ENCODE measurements at regions of chr1 and their contacts with region 1.

Region 1: DNA sequence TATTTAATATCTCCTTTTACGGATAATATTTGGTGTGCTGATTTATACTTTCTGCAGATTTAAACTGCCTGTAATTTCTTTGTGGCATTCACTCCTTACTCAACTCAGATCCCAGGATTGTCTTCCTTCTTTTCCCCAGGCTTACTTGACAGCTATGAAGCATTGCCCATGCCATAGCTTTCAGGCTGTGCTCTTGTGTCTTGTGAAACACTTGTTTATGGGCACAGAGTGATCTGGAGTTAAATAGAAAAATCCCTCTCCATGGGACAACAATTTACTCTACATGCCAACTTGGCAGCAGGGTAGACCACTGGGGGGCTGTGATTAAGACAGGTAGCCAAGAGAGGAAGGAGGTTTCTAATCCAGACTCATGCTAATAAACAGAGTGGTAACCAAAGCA is 57.4 kb downstream of the PPP1R12B start:
- DNase-seq: no peak
- ATAC-seq: peak; percentile 38 to 71 (median 58)
- H3K4me3 ChIP-seq: peak overlapping the region; percentile 60
- H3K27ac ChIP-seq: peak overlapping the region; percentile 97
- H3K4me1 ChIP-seq: peaks cover 27% of the 10 kb centered on the region
- H3K27me3 ChIP-seq: no peaks in the 10 kb centered on the region
- CTCF ChIP-seq: no peak

Region 2: DNA sequence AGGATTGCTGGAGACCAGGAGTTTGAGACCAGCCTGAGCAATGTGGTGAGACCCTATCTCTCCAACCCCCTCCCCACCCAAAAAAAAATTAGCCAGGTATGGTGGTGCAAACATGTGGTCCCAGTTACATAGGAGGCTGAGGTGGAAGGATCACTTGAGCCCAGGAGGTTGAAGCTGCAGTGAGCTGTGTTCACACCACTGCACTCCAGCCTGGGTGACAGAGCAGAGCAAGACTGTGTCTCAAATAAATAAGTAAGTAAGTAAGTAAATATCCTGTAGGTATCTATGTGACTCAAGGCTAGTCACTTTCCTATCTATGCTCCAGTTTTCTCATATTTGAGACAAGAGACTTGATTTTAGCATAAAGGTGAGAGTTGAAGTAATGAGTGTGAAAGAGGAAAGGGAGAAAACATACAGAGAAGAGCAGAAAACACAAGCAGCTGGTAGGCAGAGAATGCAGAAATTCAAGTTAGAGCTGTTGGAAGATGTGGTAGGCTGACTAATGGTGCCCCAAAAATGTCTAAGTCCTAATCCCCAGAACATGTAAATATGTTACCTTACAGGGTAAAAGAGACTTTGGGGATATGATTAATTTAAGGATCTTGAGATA is 49.9 kb before region 1 on chr1:
- intact Hi-C with region 1: loop called in 1 of 2 experiments (anchors 5 kb)
- DNase-seq: no peak
- ATAC-seq: no peak
- H3K4me3 ChIP-seq: no peak overlapping the region
- H3K27ac ChIP-seq: peak overlapping the region; percentile 7
- H3K4me1 ChIP-seq: peaks cover 28% of the 10 kb centered on the region
- H3K27me3 ChIP-seq: no peaks in the 10 kb centered on the region
- CTCF ChIP-seq: no peak

Region 3: GRCh38 chr1:202438432-202439174 is 32.7 kb after region 1 on chr1:
- intact Hi-C with region 1: no loop called
- DNase-seq: peak in 1 of 2 donors; percentile 56
- ATAC-seq: peak in 3 of 4 donors; percentile 15 to 22 (median 16)
- H3K4me3 ChIP-seq: no peak overlapping the region
- H3K27ac ChIP-seq: no peak overlapping the region
- H3K4me1 ChIP-seq: no peaks in the 10 kb centered on the region
- H3K27me3 ChIP-seq: no peaks in the 10 kb centered on the region
- CTCF ChIP-seq: no peak

Region 4: DNA sequence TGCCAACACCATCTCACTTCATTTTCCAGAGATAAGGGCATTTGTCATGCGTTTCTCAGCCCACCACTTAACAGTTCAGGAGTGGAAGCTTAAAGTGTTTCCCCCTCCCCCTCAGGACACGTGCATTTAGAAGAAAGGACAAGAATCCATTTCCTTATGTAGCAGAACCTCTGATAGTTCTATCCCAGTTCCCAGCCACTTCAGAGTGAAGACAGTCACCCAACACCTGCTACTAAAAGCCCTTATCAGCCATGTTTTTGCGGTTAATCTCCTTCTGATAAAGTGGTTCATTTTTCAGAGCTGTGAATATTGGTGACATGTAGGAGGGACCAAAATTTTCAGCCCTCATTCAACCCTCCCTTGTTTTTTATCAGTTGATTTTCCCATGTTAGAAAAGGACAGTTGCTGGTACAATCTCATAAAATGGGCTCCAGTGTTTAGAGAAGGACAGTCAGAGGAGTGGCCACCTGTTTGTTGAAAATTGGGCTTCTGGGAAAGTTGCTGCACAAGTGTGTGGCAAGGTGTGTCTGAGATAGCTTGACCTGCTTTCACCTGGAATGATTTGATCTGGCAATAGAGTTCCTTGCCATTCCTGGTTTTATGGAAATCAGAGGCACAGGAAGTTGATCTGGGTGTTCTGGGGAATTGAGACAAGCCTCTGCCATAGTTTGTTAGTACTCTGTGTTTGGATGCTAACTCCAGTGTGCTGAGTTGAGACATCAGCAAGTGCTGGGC is 56.6 kb after region 1 on chr1:
- intact Hi-C with region 1: no loop called
- DNase-seq: no peak
- ATAC-seq: no peak
- H3K4me3 ChIP-seq: no peak overlapping the region
- H3K27ac ChIP-seq: peak overlapping the region; percentile 87
- H3K4me1 ChIP-seq: peaks cover 69% of the 10 kb centered on the region
- H3K27me3 ChIP-seq: no peaks in the 10 kb centered on the region
- CTCF ChIP-seq: no peak